Left ventricle myocardium inferior (tissue), 1 donor: ENCODE measurements at regions of chr11 and their contacts with region 1.

Region 1: DNA sequence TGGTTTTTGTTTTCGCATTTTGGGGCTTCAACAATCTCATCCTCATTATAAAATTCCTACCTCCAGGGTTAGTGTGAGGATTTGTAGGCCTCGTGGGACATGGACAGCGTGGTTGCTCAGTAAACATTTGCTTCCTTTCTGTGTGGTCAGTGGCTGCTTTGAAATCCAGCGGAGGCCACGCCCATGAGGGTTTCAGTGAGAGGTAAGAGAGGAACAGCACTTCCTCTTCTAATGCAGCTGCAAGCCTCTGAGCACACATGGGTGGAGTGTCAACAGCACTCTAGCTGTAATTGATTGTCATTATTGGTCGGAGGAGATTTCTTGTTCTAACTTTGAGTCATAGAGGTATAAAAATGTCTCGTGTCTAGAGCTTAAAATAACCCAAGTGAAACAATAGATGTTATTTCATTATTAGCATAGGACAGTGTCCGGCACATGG is 6.0 kb upstream of the ARHGAP42 start:
- DNase-seq: peak; percentile 50
- H3K4me3 ChIP-seq: no peak overlapping the region
- H3K27ac ChIP-seq: no peak overlapping the region
- H3K4me1 ChIP-seq: peaks cover 29% of the 10 kb centered on the region
- H3K27me3 ChIP-seq: no peaks in the 10 kb centered on the region
- CTCF ChIP-seq: no peak

Region 2: DNA sequence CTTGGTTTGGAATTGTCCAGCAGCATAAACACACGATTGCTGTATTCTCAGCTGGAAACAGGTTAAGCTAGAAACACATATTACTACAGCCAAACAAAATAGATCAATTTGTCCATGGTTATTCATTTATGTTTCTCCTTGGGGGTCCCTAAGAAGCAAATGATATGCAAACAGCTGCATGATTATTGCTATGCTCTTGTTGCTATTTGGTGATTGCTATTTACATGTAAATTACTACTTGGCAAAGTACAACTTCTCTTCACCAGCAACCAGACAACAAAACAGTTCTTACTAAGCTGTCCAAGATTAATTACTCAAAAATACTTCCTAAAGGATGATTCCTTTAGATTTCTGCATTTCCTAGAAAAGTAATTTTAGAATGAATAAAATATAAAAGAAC is 561.9 kb before region 1 on chr11:
- intact Hi-C with region 1: no loop called
- DNase-seq: no peak
- H3K4me3 ChIP-seq: no peak overlapping the region
- H3K27ac ChIP-seq: no peak overlapping the region
- H3K4me1 ChIP-seq: no peaks in the 10 kb centered on the region
- H3K27me3 ChIP-seq: no peaks in the 10 kb centered on the region
- CTCF ChIP-seq: no peak

Region 3: GRCh38 chr11:100575870-100576705 is 105.0 kb before region 1 on chr11:
- intact Hi-C with region 1: loop called (anchors 5 kb)
- DNase-seq: no peak
- H3K4me3 ChIP-seq: no peak overlapping the region
- H3K27ac ChIP-seq: no peak overlapping the region
- H3K4me1 ChIP-seq: peaks cover under 1% of the 10 kb centered on the region
- H3K27me3 ChIP-seq: no peaks in the 10 kb centered on the region
- CTCF ChIP-seq: peak; percentile 87

Region 4: GRCh38 chr11:100619484-100619883 is 61.6 kb before region 1 on chr11:
- intact Hi-C with region 1: no loop called
- DNase-seq: no peak
- H3K4me3 ChIP-seq: no peak overlapping the region
- H3K27ac ChIP-seq: no peak overlapping the region
- H3K4me1 ChIP-seq: peaks cover 13% of the 10 kb centered on the region
- H3K27me3 ChIP-seq: no peaks in the 10 kb centered on the region
- CTCF ChIP-seq: no peak

Region 5: GRCh38 chr11:100855466-100856067 is 174.5 kb after region 1 on chr11:
- intact Hi-C with region 1: loop called (anchors 5 kb)
- DNase-seq: no peak
- H3K4me3 ChIP-seq: no peak overlapping the region
- H3K27ac ChIP-seq: no peak overlapping the region
- H3K4me1 ChIP-seq: peaks cover 14% of the 10 kb centered on the region
- H3K27me3 ChIP-seq: no peaks in the 10 kb centered on the region
- CTCF ChIP-seq: peak; percentile 80

Region 6: GRCh38 chr11:100970283-100971164 is 289.4 kb after region 1 on chr11:
- intact Hi-C with region 1: no loop called
- DNase-seq: no peak
- H3K4me3 ChIP-seq: no peak overlapping the region
- H3K27ac ChIP-seq: peak overlapping the region; percentile 67
- H3K4me1 ChIP-seq: peaks cover 13% of the 10 kb centered on the region
- H3K27me3 ChIP-seq: no peaks in the 10 kb centered on the region
- CTCF ChIP-seq: no peak

Region 7: DNA sequence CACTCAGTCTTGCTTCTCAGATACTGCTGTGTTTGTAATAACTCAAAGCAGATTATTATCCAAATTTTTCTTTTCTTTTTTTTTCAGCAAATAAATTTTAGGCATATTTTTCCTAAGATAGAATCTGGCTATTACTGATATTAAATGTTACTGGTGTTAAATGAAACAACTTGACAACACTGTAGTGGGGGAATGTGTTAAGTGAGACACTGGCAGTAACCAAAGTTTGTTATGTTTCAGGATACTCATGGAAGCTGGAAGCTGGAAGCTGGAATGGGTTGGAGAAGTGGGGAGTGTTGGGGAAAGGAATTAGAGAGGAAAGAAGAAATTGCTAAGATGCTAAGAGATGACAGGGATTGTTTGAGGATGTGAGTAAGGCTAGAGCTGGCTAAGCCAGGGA is 423.6 kb after region 1 on chr11:
- intact Hi-C with region 1: no loop called
- DNase-seq: no peak
- H3K4me3 ChIP-seq: no peak overlapping the region
- H3K27ac ChIP-seq: no peak overlapping the region
- H3K4me1 ChIP-seq: peaks cover 12% of the 10 kb centered on the region
- H3K27me3 ChIP-seq: no peaks in the 10 kb centered on the region
- CTCF ChIP-seq: no peak